Transverse colon (tissue), 4 donors: ENCODE measurements at regions of chr7 and their contacts with region 1.

Region 1: GRCh38 chr7:83271212-83272099 is 108.8 kb upstream of the PCLO start:
- DNase-seq: no peak
- H3K4me3 ChIP-seq: no peak overlapping the region
- H3K27ac ChIP-seq: no peak overlapping the region
- H3K4me1 ChIP-seq: peaks cover 0 to 14% (median 7%) of the 10 kb centered on the region in 4 donors
- H3K27me3 ChIP-seq: no peaks in the 10 kb centered on the region
- CTCF ChIP-seq: peak; percentile 20 to 36 (median 25)
- EP300 ChIP-seq: no peak
- POLR2A ChIP-seq: no peak

Region 2: DNA sequence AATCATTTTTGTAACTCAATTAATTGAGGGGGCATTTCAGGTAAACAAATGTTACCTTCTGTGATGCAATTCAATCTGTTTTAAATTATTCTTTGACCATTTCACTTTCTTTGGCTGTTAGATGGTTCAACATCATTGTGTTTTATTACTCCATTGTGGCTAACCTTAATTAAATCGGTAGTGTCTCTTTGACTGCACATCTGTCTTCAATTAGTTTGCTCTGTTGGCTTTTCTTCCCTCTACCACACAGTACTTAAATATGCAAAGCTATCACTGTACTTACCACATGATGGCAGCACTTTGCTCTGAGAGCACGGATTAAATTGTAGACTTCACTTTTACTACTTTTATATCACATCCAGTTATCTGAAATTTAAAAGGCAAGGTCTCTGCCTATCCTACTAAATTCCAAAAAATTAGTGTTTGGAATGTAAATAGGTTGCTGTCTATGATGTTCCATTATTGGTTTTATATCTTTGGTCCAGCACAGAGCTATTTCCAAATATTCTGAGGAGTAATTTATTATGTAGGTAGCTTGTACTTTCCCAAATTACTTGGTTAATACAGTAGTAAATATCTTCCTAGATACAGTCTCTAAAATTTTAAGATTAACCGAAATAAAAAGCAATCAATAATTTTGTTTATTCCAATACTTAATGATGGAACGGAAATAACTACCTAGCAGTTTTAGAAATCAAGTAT is 460.7 kb before region 1 on chr7:
- in situ Hi-C with region 1: loop called in 1 of 4 experiments (anchors 25 kb)
- intact Hi-C with region 1: no loop called
- DNase-seq: no peak
- H3K4me3 ChIP-seq: no peak overlapping the region
- H3K27ac ChIP-seq: no peak overlapping the region
- H3K4me1 ChIP-seq: no peaks in the 10 kb centered on the region
- H3K27me3 ChIP-seq: no peaks in the 10 kb centered on the region
- CTCF ChIP-seq: peak; percentile 42 to 54 (median 46)
- EP300 ChIP-seq: no peak
- POLR2A ChIP-seq: no peak